Panc1 (cell line): ENCODE measurements at regions of chr10 and their contacts with region 1.

Region 1: GRCh38 chr10:118568327-118568848 is 27.1 kb downstream of the PRLHR start:
- DNase-seq: peak; percentile 17
- ATAC-seq: peak; percentile 64
- H3K4me3 ChIP-seq: peak overlapping the region in 1 of 2 experiments; percentile 28; a peak in 1 of 4 replicates
- H3K27ac ChIP-seq: no peak overlapping the region
- H3K4me1 ChIP-seq: no peaks in the 10 kb centered on the region
- H3K27me3 ChIP-seq: no peaks in the 10 kb centered on the region
- CTCF ChIP-seq: peak; percentile 87

Region 2: GRCh38 chr10:117112220-117112619 is 1456.2 kb before region 1 on chr10:
- CTCF ChIA-PET with region 1: no interaction called
- POLR2A ChIA-PET with region 1: no interaction called
- in situ Hi-C with region 1: no loop called
- intact Hi-C with region 1: no loop called
- DNase-seq: no peak
- ATAC-seq: peak; percentile 70; the same call in 1 of the 2 replicates
- H3K4me3 ChIP-seq: no peak overlapping the region
- H3K27ac ChIP-seq: no peak overlapping the region
- H3K4me1 ChIP-seq: no peaks in the 10 kb centered on the region
- H3K27me3 ChIP-seq: peaks cover 8% of the 10 kb centered on the region; the same call in 1 of the 2 replicates
- CTCF ChIP-seq: peak; percentile 81

Region 3: DNA sequence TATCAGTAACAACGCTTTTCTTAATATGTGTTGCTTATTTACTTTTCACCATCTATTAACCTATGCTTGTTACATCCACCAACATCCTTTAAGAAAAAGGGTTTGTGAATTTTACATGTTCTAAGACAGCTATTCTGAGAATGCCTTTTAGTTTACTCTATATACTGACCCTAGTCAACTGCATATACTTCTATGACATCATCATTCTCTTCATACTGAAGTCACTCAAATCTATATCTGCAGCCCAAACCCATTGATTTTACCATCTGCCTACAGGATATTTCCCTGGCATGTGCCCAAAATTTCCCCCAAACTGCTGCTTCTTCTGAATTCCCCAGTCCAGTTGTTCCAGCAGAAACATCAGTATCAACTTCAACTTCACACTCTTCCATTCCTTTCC is 131.6 kb before region 1 on chr10:
- CTCF ChIA-PET with region 1: no interaction called
- POLR2A ChIA-PET with region 1: no interaction called
- in situ Hi-C with region 1: no loop called
- intact Hi-C with region 1: no loop called
- DNase-seq: no peak
- ATAC-seq: no peak
- H3K4me3 ChIP-seq: no peak overlapping the region
- H3K27ac ChIP-seq: no peak overlapping the region
- H3K4me1 ChIP-seq: no peaks in the 10 kb centered on the region
- H3K27me3 ChIP-seq: peaks cover 2% of the 10 kb centered on the region
- CTCF ChIP-seq: no peak

Region 4: GRCh38 chr10:118638680-118639079 is 70.3 kb after region 1 on chr10:
- CTCF ChIA-PET with region 1: no interaction called
- POLR2A ChIA-PET with region 1: no interaction called
- in situ Hi-C with region 1: no loop called
- intact Hi-C with region 1: no loop called
- DNase-seq: no peak
- ATAC-seq: no peak
- H3K4me3 ChIP-seq: no peak overlapping the region
- H3K27ac ChIP-seq: no peak overlapping the region
- H3K4me1 ChIP-seq: no peaks in the 10 kb centered on the region
- H3K27me3 ChIP-seq: peaks cover 15% of the 10 kb centered on the region
- CTCF ChIP-seq: no peak

Region 5: DNA sequence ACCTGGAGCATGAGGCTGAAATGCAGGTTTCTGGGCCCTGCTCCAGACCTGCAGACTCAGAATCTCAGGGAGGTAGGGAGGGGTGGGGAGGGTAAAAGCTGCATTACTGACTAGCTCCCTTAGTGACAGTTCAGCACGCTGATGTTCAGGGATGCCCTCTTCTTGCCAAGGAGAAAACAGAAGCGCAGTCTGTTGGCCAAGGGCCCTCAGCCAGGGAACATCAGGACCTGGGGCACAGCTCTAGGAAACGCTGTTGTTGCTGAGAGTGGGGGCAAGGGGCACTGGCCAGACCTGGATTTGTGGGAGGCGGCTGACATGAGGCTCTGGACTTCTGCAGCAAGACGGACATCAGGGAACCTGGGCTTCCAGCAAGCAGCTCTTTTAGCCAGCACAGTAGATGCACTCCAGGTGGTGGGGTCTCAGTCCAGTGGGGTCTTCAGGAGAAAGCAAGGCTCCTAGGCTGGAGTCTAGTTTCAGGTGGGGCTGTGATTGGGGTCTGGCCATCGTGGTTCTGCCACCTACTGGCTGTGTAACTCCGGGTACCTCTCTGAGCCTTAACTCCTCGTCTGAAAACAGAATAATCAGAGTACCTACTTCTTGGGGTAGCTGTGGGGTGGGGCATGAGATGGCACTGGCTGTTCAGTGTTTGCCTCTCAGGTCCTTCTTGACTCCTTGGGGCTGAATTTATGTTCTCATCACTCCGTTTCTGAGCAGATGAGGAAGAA is 100.0 kb after region 1 on chr10:
- CTCF ChIA-PET with region 1: no interaction called
- POLR2A ChIA-PET with region 1: interaction called, 10 read pairs
- in situ Hi-C with region 1: no loop called
- intact Hi-C with region 1: no loop called
- DNase-seq: no peak
- ATAC-seq: no peak
- H3K4me3 ChIP-seq: no peak overlapping the region
- H3K27ac ChIP-seq: no peak overlapping the region
- H3K4me1 ChIP-seq: no peaks in the 10 kb centered on the region
- H3K27me3 ChIP-seq: no peaks in the 10 kb centered on the region
- CTCF ChIP-seq: no peak; the same call in 1 of the 2 replicates

Region 6: GRCh38 chr10:118720685-118721538 is 152.5 kb after region 1 on chr10:
- CTCF ChIA-PET with region 1: interaction called, 7 read pairs
- POLR2A ChIA-PET with region 1: no interaction called
- in situ Hi-C with region 1: no loop called
- intact Hi-C with region 1: loop called (anchors 2 kb)
- DNase-seq: peak; percentile 50
- ATAC-seq: peak; percentile 76; the same call in 1 of the 2 replicates
- H3K4me3 ChIP-seq: no peak overlapping the region
- H3K27ac ChIP-seq: no peak overlapping the region
- H3K4me1 ChIP-seq: peaks cover 6% of the 10 kb centered on the region; the same call in 1 of the 2 replicates
- H3K27me3 ChIP-seq: no peaks in the 10 kb centered on the region
- CTCF ChIP-seq: peak; percentile 88; the same call in 1 of the 2 replicates

Region 7: GRCh38 chr10:118800920-118801319 is 232.5 kb after region 1 on chr10:
- CTCF ChIA-PET with region 1: interaction called, 8 read pairs
- POLR2A ChIA-PET with region 1: no interaction called
- in situ Hi-C with region 1: no loop called
- intact Hi-C with region 1: loop called (anchors 5 kb)
- DNase-seq: no peak
- ATAC-seq: peak; percentile 79
- H3K4me3 ChIP-seq: no peak overlapping the region
- H3K27ac ChIP-seq: no peak overlapping the region
- H3K4me1 ChIP-seq: peaks cover 3% of the 10 kb centered on the region; the same call in 1 of the 2 replicates
- H3K27me3 ChIP-seq: 0 out of 2 replicates have a peak, but pooled peaks cover 2% of the 10 kb centered on the region
- CTCF ChIP-seq: peak; percentile 80